IMR-90 (cell line): ENCODE measurements at regions of chr4 and their contacts with region 1.

Region 1: DNA sequence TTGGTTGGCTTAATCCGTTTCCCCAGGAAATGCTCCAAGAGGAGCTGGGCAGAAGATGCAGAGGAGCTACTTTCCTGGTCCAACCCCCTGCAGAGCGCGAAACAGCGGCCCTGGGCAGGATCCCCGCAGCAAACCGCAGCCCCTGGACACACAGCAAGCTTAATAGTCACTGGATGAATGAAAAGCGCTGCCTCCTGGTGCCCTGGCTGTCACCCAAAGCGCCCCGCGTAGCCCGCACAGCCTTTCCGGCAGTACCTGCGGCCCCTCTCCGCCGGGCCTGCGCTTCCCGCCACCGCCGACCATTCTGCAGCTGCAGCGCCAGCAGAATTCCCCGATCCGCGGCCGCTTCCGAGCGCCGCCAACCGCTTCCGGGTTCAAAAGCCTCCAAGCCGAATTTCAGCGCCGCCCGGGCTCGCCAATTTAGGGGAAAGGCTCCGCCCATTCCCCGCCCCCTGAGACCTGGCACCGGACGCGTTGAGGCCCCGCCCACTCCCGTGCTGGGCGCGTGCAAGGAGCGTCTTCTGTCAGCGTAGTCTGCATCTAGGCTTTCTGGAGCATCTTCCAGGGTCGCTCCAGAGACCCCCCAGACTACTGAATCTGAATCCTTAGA is at the start of gene HPF1:
- DNase-seq: peak; percentile 75
- ATAC-seq: peak; percentile 95
- H3K4me3 ChIP-seq: peak within 1 kb of the TSS; percentile 81
- H3K27ac ChIP-seq: peak within 1 kb of the TSS; percentile 45; the same call in 1 of the 2 replicates
- H3K4me1 ChIP-seq: peaks cover 1% of the 10 kb centered on the region; the same call in 1 of the 2 replicates
- H3K27me3 ChIP-seq: no peaks in the 10 kb centered on the region; the same call in none of the 2 replicates
- CTCF ChIP-seq: no peak
- POLR2A ChIP-seq: no peak
- RAD21 ChIP-seq: no peak
- total RNA-seq, gene HPF1: 15.2 and 27.5 TPM in 2 replicates

Region 2: DNA sequence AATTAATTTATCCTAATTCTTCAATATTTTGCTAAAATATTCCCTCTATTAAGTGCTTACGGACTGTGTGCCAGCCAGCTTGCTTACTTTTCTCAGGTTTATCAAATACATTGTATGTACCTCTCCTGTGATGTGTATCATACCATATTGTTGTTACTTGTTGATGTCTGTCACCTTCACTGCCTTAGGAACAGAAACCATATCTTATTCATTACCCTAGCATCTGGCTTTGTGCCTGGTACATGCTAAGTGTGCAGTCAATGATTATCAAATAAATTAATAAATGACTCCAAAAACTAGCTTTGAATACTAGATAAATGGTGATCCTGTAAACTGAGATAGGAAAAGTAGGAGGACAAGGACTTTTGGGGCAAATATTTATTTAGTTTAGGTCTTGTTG is 130.4 kb before region 1 on chr4:
- CTCF ChIA-PET with region 1: no interaction called
- POLR2A ChIA-PET with region 1: no interaction called
- dilution Hi-C with region 1: no loop called
- in situ Hi-C with region 1: no loop called
- intact Hi-C with region 1: loop called (anchors 1 kb)
- DNase-seq: no peak
- ATAC-seq: no peak
- H3K4me3 ChIP-seq: no peak overlapping the region
- H3K27ac ChIP-seq: no peak overlapping the region
- H3K4me1 ChIP-seq: no peaks in the 10 kb centered on the region
- H3K27me3 ChIP-seq: no peaks in the 10 kb centered on the region
- CTCF ChIP-seq: no peak
- POLR2A ChIP-seq: no peak
- RAD21 ChIP-seq: no peak

Region 3: DNA sequence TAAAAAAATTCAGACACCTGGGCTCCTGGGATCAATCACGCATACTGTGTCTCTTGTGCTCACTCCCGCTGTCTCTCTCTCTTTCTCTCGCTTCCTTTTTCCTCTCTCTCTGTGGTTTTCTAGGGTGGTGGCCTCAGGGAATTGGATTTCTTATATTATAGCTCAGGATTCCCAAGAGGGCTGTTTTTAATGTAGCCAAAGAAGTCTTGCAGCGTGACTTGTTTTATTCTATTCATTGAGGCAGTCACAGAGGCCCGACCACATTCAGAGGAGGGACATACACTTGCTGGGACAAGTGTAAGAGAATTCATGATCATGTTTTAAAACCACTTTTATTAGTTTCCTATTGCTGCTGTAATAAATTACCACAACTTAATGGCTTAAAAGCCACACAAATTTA is 59.3 kb before region 1 on chr4:
- CTCF ChIA-PET with region 1: no interaction called
- POLR2A ChIA-PET with region 1: no interaction called
- dilution Hi-C with region 1: no loop called
- in situ Hi-C with region 1: no loop called
- intact Hi-C with region 1: no loop called
- DNase-seq: no peak
- ATAC-seq: no peak
- H3K4me3 ChIP-seq: no peak overlapping the region
- H3K27ac ChIP-seq: no peak overlapping the region
- H3K4me1 ChIP-seq: no peaks in the 10 kb centered on the region
- H3K27me3 ChIP-seq: no peaks in the 10 kb centered on the region
- CTCF ChIP-seq: no peak
- POLR2A ChIP-seq: no peak
- RAD21 ChIP-seq: no peak

Region 4: DNA sequence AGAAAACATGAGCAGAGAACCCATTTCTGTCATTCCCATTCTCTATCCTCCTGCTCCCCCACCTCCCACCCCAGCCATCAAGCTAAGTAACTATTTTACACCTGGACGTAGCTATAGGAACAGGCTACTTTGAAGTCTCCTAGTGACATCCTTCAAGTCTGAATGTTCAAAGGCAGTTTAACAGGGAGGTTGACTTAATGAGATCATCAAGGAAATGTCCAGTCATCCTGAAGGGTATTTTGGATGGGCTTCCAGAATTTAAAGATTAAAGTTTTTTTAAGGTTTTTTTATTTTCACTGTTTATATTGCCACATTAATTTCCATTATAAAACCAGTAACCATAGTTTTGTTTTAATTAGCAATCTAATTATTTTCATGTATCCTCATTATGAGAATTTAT is 41.0 kb before region 1 on chr4:
- CTCF ChIA-PET with region 1: no interaction called
- POLR2A ChIA-PET with region 1: no interaction called
- dilution Hi-C with region 1: no loop called
- in situ Hi-C with region 1: no loop called
- intact Hi-C with region 1: loop called (anchors 5 kb)
- DNase-seq: peak; percentile 44
- ATAC-seq: no peak
- H3K4me3 ChIP-seq: no peak overlapping the region
- H3K27ac ChIP-seq: no peak overlapping the region
- H3K4me1 ChIP-seq: no peaks in the 10 kb centered on the region
- H3K27me3 ChIP-seq: no peaks in the 10 kb centered on the region
- CTCF ChIP-seq: no peak
- POLR2A ChIP-seq: no peak
- RAD21 ChIP-seq: no peak

Region 5: GRCh38 chr4:170428929-170429328 is 671.2 kb after region 1 on chr4:
- CTCF ChIA-PET with region 1: no interaction called
- POLR2A ChIA-PET with region 1: no interaction called
- dilution Hi-C with region 1: no loop called
- in situ Hi-C with region 1: no loop called
- intact Hi-C with region 1: no loop called
- DNase-seq: no peak
- ATAC-seq: no peak
- H3K4me3 ChIP-seq: no peak overlapping the region
- H3K27ac ChIP-seq: no peak overlapping the region
- H3K4me1 ChIP-seq: no peaks in the 10 kb centered on the region
- H3K27me3 ChIP-seq: no peaks in the 10 kb centered on the region
- CTCF ChIP-seq: no peak
- POLR2A ChIP-seq: no peak
- RAD21 ChIP-seq: no peak